Calu3 (cell line): ENCODE measurements at regions of chr6 and their contacts with region 1.

Region 1: DNA sequence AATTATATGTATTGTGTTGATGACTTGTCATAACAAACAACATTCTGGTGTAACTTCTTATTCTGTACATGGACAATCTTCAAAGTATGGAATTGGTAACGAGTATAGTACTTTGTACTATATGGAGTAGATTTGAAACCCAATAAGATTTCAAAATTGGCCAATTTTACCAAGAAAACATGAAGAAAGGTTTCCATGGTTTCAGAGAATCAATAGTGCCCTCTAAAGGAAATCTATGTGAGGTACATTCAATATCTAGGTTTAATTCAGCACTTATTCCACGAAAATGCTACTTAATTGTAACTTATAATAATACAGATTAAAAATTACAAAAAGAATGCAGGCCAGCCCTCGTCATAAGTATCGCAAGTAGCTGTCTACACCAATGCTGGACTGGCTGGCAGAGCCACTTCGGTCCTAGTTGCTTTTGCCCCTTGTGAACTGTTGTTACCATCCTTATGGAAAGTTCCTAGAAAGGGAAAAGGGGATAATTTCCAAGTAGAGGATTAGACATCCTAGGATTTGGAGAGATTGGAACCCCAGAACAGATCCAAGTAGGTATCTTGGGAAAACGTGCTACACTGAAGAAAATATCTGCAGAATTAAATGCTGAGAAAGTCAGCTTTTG is 70.9 kb downstream of the LCA5 start:
- DNase-seq: no peak
- H3K4me3 Mint-ChIP-seq: no peak overlapping the region
- H3K27ac Mint-ChIP-seq: peak overlapping the region; percentile 23
- H3K4me1 Mint-ChIP-seq: peaks cover 81% of the 10 kb centered on the region
- H3K27me3 Mint-ChIP-seq: no peaks in the 10 kb centered on the region
- CTCF ChIP-seq: peak; percentile 31

Region 2: DNA sequence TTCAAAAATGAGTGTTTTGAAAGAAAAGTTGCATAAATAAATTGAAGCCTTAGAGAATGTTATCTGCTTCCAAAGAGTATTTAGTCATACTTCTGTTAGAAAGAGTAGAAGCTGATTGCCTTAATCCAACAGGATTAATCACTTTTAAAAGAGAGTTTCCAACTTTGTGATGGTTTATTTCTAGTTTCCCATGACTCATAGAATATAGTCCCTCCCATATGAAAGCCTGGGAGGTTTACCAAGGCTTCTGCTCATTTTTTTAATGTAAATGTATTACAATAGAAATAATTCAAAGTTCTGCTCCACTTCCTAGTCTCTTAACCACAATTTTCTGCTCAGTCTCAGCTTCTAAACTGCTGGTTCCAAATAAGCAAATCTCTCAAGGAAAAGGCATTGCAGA is 717.0 kb before region 1 on chr6:
- CTCF ChIA-PET with region 1: no interaction called
- intact Hi-C with region 1: no loop called
- DNase-seq: no peak
- H3K4me3 Mint-ChIP-seq: no peak overlapping the region
- H3K27ac Mint-ChIP-seq: no peak overlapping the region
- H3K4me1 Mint-ChIP-seq: no peaks in the 10 kb centered on the region
- H3K27me3 Mint-ChIP-seq: no peaks in the 10 kb centered on the region
- CTCF ChIP-seq: no peak

Region 3: DNA sequence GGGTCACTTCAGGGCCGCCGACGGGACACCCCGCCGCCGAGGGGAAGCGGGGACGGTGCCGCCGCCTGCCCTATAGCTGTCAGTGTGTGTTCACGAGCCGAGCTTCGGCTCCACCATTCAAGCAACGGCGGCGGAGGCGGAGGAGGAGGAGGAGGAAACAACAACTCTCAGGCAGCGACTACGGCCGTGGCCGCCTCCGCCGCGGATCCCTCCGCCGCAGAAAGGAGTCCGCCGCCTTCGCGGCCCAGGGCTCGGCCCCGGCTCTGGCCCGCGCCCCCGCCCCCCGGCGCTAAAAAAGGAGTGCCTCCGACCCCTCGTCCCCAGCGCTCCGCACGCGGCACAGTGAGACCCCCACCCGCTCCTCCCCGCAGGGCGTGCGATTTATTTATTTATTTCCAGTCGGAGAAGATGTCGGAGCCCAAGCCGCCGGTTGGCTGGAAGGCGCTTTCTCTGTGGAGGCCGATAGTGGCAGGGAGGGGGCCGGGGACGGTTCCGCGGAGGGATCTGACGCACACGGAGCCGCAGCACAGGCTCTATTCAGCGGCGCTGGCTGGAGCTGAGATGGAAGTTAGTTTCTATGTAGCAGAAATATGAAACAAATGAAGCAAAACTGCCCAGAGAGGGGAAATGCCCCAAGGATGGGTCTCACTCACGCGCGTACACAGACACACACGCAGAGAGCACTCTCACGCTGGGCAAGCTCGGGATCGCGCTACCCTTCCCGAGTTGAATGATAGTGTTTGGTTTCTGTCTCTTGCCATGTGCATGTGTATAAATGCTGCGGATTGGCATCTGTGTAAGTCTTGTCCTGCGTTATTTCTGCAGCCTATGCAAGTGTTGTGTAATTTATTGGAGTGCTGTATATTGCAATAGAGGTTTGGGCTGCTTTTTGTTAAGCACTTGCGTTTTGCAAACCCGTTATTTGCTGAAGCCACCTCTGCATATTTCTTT is 388.0 kb before region 1 on chr6 and contains the start of gene PHIP:
- CTCF ChIA-PET with region 1: no interaction called
- intact Hi-C with region 1: loop called (anchors 2 kb)
- DNase-seq: peak; percentile 92
- H3K4me3 Mint-ChIP-seq: peak within 1 kb of the TSS; percentile 92
- H3K27ac Mint-ChIP-seq: peak within 1 kb of the TSS; percentile 92
- H3K4me1 Mint-ChIP-seq: no peaks in the 10 kb centered on the region
- H3K27me3 Mint-ChIP-seq: no peaks in the 10 kb centered on the region
- CTCF ChIP-seq: no peak
- total RNA-seq, gene PHIP: 43.3 and 50.8 TPM in 2 replicates

Region 4: GRCh38 chr6:79233611-79234149 is 232.6 kb before region 1 on chr6:
- CTCF ChIA-PET with region 1: no interaction called
- intact Hi-C with region 1: loop called (anchors 2 kb)
- DNase-seq: peak; percentile 87
- H3K4me3 Mint-ChIP-seq: peak overlapping the region; percentile 89
- H3K27ac Mint-ChIP-seq: peak overlapping the region; percentile 78
- H3K4me1 Mint-ChIP-seq: peaks cover 54% of the 10 kb centered on the region
- H3K27me3 Mint-ChIP-seq: no peaks in the 10 kb centered on the region
- CTCF ChIP-seq: peak; percentile 14

Region 5: DNA sequence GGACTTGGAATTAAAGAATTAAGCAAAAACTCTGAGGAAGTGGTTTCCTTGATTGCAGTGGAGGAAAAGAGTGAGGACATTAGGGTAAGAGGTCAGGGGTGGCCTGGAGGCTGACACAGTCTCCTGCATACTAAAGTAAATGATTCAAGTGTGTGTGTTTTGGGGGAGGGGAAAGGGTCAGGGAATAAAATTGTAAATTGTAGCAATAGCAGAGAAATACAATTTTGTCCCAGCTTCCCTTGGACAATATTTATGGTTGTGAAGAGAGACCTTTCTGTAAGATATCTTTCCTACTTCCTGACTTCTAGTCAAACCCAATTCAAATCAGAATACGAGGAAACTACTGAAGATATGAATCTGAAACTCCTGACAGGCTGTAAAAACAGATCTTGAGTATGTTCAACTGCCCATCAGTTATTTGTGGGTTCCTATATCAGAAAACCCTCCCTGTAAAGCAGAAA is 88.4 kb before region 1 on chr6:
- CTCF ChIA-PET with region 1: no interaction called
- intact Hi-C with region 1: loop called (anchors 10 kb)
- DNase-seq: peak; percentile 29
- H3K4me3 Mint-ChIP-seq: peak overlapping the region; percentile 11
- H3K27ac Mint-ChIP-seq: peak overlapping the region; percentile 78
- H3K4me1 Mint-ChIP-seq: peaks cover 42% of the 10 kb centered on the region
- H3K27me3 Mint-ChIP-seq: no peaks in the 10 kb centered on the region
- CTCF ChIP-seq: no peak

Region 6: DNA sequence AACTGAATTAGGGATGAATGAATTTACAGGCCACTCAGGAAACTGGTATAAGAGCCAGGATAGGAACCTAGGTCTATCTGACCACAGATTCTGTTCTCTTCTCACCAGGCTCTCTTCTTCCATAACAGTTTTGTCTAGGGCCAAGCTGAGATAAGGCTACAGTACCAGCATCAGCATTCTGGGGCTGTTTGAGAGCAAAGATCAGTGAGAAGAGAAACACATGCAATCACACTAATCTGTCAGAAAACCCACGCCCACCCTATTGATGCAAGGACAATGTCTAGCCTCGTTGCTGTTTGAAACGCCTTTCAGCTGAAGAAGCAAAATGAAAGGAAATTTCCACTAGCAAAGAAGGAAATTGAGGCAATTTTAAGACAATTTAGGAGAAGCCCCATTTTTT is 66.8 kb before region 1 on chr6:
- CTCF ChIA-PET with region 1: no interaction called
- intact Hi-C with region 1: no loop called
- DNase-seq: no peak
- H3K4me3 Mint-ChIP-seq: no peak overlapping the region
- H3K27ac Mint-ChIP-seq: no peak overlapping the region
- H3K4me1 Mint-ChIP-seq: no peaks in the 10 kb centered on the region
- H3K27me3 Mint-ChIP-seq: no peaks in the 10 kb centered on the region
- CTCF ChIP-seq: no peak

Region 7: GRCh38 chr6:79450984-79451383 is 15.3 kb before region 1 on chr6:
- CTCF ChIA-PET with region 1: no interaction called
- intact Hi-C with region 1: no loop called
- DNase-seq: no peak
- H3K4me3 Mint-ChIP-seq: no peak overlapping the region
- H3K27ac Mint-ChIP-seq: no peak overlapping the region
- H3K4me1 Mint-ChIP-seq: peaks cover 8% of the 10 kb centered on the region
- H3K27me3 Mint-ChIP-seq: no peaks in the 10 kb centered on the region
- CTCF ChIP-seq: no peak

Region 8: GRCh38 chr6:79571030-79571367 is 104.7 kb after region 1 on chr6:
- CTCF ChIA-PET with region 1: no interaction called
- intact Hi-C with region 1: no loop called
- DNase-seq: no peak
- H3K4me3 Mint-ChIP-seq: peak overlapping the region; percentile 37
- H3K27ac Mint-ChIP-seq: peak overlapping the region; percentile 98
- H3K4me1 Mint-ChIP-seq: peaks cover 63% of the 10 kb centered on the region
- H3K27me3 Mint-ChIP-seq: no peaks in the 10 kb centered on the region
- CTCF ChIP-seq: no peak

Region 9: DNA sequence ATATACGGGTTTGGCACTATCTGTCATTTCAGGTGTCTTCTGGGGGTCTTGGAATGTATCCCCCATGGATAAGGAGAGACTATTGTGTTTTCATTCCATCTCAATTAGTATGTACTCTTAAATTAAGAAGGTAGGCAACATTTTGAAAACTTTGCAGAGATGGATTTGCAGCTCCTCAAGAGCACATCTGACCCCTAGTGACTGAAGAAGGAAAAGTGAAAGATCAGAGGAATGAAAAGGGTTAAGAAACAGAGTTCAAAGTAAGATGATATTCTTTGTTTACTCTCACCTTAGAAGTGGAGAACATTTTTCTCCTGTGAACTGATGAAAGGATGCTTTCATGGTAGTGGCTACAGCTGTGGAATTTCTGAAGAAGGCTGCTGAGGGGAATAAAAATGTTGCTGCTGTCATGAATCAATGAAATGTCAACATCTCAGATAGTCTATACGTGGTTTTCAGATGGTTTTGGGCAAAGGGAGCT is 206.3 kb after region 1 on chr6:
- CTCF ChIA-PET with region 1: no interaction called
- intact Hi-C with region 1: loop called (anchors 5 kb)
- DNase-seq: peak; percentile 23
- H3K4me3 Mint-ChIP-seq: peak overlapping the region; percentile 11
- H3K27ac Mint-ChIP-seq: peak overlapping the region; percentile 97
- H3K4me1 Mint-ChIP-seq: peaks cover 80% of the 10 kb centered on the region
- H3K27me3 Mint-ChIP-seq: no peaks in the 10 kb centered on the region
- CTCF ChIP-seq: peak; percentile 66